Activated T-helper 1 cell treated with anti-CD3 and anti-CD28 coated beads, Interleukin-12 subunit alpha, Interleukin-12 subunit beta, Interleukin-2, Interleukin-4 antibody, amounts not matched to agents 30 ng/mL and 10 ng/mL and 1 ng/mL, durations not matched to agents 14 hours and 24 hours and 36 hours (primary cell): ENCODE measurements at regions of chr4 and their contacts with region 1.

Region 1: DNA sequence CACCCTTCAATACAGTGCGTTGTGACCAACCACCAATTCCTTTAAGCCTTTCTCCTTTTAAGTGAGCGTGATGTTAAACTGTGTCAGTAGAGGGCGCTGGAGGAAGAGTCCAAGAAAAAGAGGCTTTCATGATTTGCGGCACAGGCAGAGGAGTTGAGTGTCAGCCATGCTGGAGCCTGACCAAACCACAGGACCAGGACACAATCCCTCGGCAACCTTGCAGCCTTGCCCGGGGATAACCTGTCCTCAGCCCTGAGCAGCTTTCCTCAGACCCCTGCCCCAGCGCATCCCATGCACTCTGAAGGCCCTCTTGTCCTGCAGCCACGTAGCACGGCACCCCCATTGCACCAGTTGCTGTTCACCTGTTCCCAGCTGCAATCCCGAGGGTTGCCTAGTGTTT is 53.5 kb upstream of the SMIM31 start:
- DNase-seq: no peak
- H3K4me3 Mint-ChIP-seq: no peak overlapping the region
- H3K27ac Mint-ChIP-seq: no peak overlapping the region
- H3K4me1 Mint-ChIP-seq: peaks cover 4% of the 10 kb centered on the region
- H3K27me3 Mint-ChIP-seq: peaks cover 5% of the 10 kb centered on the region

Region 2: DNA sequence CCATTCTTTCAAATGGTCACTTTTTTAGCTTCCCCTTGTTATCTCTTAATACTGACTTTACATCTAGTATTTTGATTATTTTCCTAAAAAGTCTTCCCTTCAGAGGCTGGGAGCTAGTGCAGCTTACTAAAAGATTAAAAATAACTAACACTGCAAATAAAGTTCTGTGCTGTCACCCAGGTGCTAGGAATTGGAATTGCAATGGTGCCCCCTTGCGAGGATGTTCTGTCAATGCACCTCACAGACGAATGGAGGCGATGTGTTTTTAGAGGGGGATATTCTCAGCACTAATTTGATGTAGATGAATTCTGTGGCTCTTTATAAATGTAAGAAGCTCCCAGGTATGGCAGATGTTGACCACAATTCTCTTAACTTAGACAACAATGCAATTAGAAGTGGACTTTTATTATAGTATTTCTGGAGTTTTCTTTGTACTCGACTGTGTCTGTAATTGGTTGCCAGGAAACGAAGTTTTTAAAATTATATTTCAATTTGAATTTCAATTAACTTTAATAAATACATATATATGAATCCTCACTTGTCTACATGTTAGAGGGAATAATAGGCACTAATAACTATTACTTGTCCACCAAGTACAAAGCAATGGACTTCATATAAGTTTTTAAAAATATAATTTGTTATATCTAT is 31.5 kb after region 1 on chr4:
- intact Hi-C with region 1: loop called (anchors 2 kb)
- DNase-seq: no peak
- H3K4me3 Mint-ChIP-seq: no peak overlapping the region
- H3K27ac Mint-ChIP-seq: no peak overlapping the region
- H3K4me1 Mint-ChIP-seq: no peaks in the 10 kb centered on the region
- H3K27me3 Mint-ChIP-seq: peaks cover 3% of the 10 kb centered on the region

Region 3: GRCh38 chr4:164997324-164997723 is 296.9 kb after region 1 on chr4:
- intact Hi-C with region 1: no loop called
- DNase-seq: no peak
- H3K4me3 Mint-ChIP-seq: no peak overlapping the region
- H3K27ac Mint-ChIP-seq: no peak overlapping the region
- H3K4me1 Mint-ChIP-seq: no peaks in the 10 kb centered on the region
- H3K27me3 Mint-ChIP-seq: peaks cover 17% of the 10 kb centered on the region